SK-N-SH (cell line): ENCODE measurements at regions of chr3 and their contacts with region 1.

Region 1: GRCh38 chr3:119388577-119388976 is 74.8 kb downstream of the TMEM39A start:
- DNase-seq: peak; percentile 38
- H3K4me3 ChIP-seq: no peak overlapping the region
- H3K27ac ChIP-seq: no peak overlapping the region; a peak in 1 of 4 replicates
- H3K4me1 ChIP-seq: no peaks in the 10 kb centered on the region; a peak in 1 of 4 replicates
- H3K27me3 ChIP-seq: no peaks in the 10 kb centered on the region
- CTCF ChIP-seq: peak; percentile 39
- EP300 ChIP-seq: no peak
- RAD21 ChIP-seq: peak; percentile 65

Region 2: GRCh38 chr3:119359476-119360326 is 28.9 kb before region 1 on chr3:
- CTCF ChIA-PET with region 1: no interaction called
- POLR2A ChIA-PET with region 1: no interaction called
- DNase-seq: no peak
- H3K4me3 ChIP-seq: no peak overlapping the region
- H3K27ac ChIP-seq: peak overlapping the region in 1 of 2 experiments; percentile 18; a peak in 1 of 4 replicates
- H3K4me1 ChIP-seq: peaks cover 0 to 31% of the 10 kb centered on the region in 2 experiments; a peak in 1 of 4 replicates
- H3K27me3 ChIP-seq: no peaks in the 10 kb centered on the region
- CTCF ChIP-seq: no peak
- EP300 ChIP-seq: no peak
- RAD21 ChIP-seq: no peak

Region 3: DNA sequence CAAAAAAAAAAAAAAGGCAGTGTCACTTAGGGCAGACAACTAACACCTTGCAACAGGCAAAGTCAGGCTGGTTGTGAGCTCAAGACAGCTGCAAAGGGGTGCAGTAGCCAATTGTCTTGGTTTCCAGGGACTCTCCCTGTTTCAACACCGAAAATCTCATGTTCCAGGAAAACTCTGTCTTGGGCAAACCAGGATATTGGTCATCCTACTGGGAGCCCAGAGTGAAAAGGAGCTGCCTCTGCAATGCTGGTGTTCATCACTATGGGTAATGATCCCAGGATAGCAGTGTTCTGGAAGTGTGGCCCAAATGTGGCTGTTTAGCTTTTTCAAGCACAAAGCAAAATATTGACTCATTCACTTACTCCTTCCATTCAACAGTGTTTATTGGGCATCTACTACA is 11.8 kb before region 1 on chr3:
- CTCF ChIA-PET with region 1: interaction called, 10 read pairs
- POLR2A ChIA-PET with region 1: no interaction called
- DNase-seq: no peak
- H3K4me3 ChIP-seq: no peak overlapping the region
- H3K27ac ChIP-seq: no peak overlapping the region
- H3K4me1 ChIP-seq: peaks cover 0 to 6% of the 10 kb centered on the region in 2 experiments; a peak in 1 of 4 replicates
- H3K27me3 ChIP-seq: no peaks in the 10 kb centered on the region
- CTCF ChIP-seq: no peak
- EP300 ChIP-seq: no peak
- RAD21 ChIP-seq: no peak